IMR-90 (cell line): ENCODE measurements at regions of chr13 and their contacts with region 1.

Region 1: DNA sequence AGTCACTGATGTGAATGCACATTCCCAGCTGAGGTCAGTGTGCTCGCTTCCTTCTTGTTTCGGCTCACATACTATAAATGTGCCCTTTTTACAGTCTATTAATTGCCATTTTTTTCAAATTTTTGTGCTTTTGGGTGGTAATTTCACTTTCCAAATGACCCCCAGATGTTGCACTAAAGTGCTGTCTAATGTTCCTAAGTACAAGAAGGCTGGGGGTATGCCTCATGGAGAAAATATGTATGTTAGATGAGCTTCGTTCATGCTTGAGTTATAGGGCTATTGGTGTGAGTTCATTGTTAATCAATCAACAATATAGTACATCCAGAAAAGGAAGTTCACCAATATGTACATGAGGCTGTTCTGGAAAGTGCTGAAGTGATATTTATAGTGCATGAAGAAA is 84.7 kb downstream of the KL start:
- DNase-seq: no peak
- ATAC-seq: no peak
- H3K4me3 ChIP-seq: no peak overlapping the region
- H3K27ac ChIP-seq: no peak overlapping the region
- H3K4me1 ChIP-seq: no peaks in the 10 kb centered on the region; the same call in 1 of the 2 replicates
- H3K27me3 ChIP-seq: no peaks in the 10 kb centered on the region
- CTCF ChIP-seq: no peak
- POLR2A ChIP-seq: no peak
- RAD21 ChIP-seq: no peak

Region 2: GRCh38 chr13:33057019-33057780 is 43.7 kb before region 1 on chr13:
- CTCF ChIA-PET with region 1: no interaction called
- POLR2A ChIA-PET with region 1: no interaction called
- dilution Hi-C with region 1: no loop called
- in situ Hi-C with region 1: no loop called
- intact Hi-C with region 1: no loop called
- DNase-seq: peak; percentile 6
- ATAC-seq: peak; percentile 72
- H3K4me3 ChIP-seq: no peak overlapping the region
- H3K27ac ChIP-seq: no peak overlapping the region
- H3K4me1 ChIP-seq: peaks cover 2% of the 10 kb centered on the region
- H3K27me3 ChIP-seq: no peaks in the 10 kb centered on the region
- CTCF ChIP-seq: peak; percentile 33
- POLR2A ChIP-seq: no peak
- RAD21 ChIP-seq: no peak

Region 3: DNA sequence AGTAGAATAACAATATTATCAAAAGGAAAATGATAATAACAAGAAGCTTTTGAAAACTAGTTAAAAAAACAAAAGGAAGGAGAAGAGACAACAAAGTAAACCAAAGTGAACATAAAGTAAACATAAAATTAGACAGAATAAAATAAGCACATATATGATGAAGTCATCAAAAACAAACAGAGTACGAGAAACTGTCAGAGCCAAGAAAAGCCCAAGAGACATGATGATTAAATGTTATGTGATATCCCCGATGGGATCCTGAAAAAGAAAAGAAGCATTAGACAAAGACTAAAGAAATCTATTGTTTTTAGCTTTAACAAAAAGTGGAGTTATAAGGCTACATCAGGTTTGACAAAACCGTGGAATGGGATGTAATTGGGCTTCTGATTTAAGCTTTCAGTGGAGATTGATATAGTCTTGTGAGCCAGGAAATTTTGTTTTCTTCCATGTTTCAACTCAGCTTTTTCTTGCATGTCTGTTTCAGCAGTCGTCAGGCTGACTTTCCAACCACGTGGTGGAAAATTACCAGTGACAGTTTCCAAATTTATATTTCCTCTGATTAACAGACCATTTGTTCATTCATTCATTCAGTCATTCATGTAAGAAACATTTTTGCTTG is 19.8 kb before region 1 on chr13:
- CTCF ChIA-PET with region 1: no interaction called
- POLR2A ChIA-PET with region 1: no interaction called
- dilution Hi-C with region 1: no loop called
- in situ Hi-C with region 1: no loop called
- intact Hi-C with region 1: loop called (anchors 2 kb)
- DNase-seq: no peak
- ATAC-seq: no peak
- H3K4me3 ChIP-seq: no peak overlapping the region
- H3K27ac ChIP-seq: no peak overlapping the region
- H3K4me1 ChIP-seq: no peaks in the 10 kb centered on the region
- H3K27me3 ChIP-seq: no peaks in the 10 kb centered on the region; the same call in 1 of the 2 replicates
- CTCF ChIP-seq: no peak
- POLR2A ChIP-seq: no peak
- RAD21 ChIP-seq: no peak

Region 4: GRCh38 chr13:33188093-33188882 is 87.4 kb after region 1 on chr13:
- CTCF ChIA-PET with region 1: no interaction called
- POLR2A ChIA-PET with region 1: no interaction called
- dilution Hi-C with region 1: no loop called
- in situ Hi-C with region 1: no loop called
- intact Hi-C with region 1: no loop called
- DNase-seq: peak; percentile 57
- ATAC-seq: no peak
- H3K4me3 ChIP-seq: no peak overlapping the region
- H3K27ac ChIP-seq: peak overlapping the region; percentile 51; the same call in 1 of the 2 replicates
- H3K4me1 ChIP-seq: peaks cover 33% of the 10 kb centered on the region
- H3K27me3 ChIP-seq: no peaks in the 10 kb centered on the region
- CTCF ChIP-seq: no peak
- POLR2A ChIP-seq: no peak
- RAD21 ChIP-seq: no peak